CD8-positive, alpha-beta T cell (primary cell): ENCODE measurements at regions of chr12 and their contacts with region 1.

Region 1: DNA sequence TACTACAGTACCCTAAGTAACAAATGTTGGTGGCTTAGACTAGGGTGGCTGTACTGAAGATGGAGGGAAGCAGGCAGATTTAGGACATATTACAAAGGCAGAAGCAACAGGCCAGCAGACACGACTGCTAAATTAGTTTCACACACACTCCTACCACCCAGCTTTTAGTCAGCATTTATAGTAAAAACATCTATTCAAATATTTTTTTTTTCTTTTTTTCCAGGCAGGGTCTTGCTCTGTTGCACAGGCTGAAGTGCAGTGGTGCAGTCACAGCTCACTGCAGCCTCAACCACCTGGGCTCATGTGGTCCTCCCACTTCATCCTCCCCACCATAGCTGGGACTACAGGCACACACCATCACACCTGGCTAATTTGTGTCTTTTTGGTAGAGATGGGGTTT is 72.9 kb downstream of the CDK17 start:
- DNase-seq: no peak
- ATAC-seq: peak; percentile 24
- H3K4me3 ChIP-seq: no peak overlapping the region
- H3K4me3 Mint-ChIP-seq: no peak overlapping the region
- H3K27ac ChIP-seq: no peak overlapping the region
- H3K27ac Mint-ChIP-seq: peak overlapping the region; percentile 70
- H3K4me1 ChIP-seq: peaks cover 37% of the 10 kb centered on the region
- H3K4me1 Mint-ChIP-seq: peaks cover 65% of the 10 kb centered on the region
- H3K27me3 ChIP-seq: no peaks in the 10 kb centered on the region
- H3K27me3 Mint-ChIP-seq: no peaks in the 10 kb centered on the region
- CTCF ChIP-seq: no peak

Region 2: GRCh38 chr12:96314723-96315122 is 12.6 kb before region 1 on chr12:
- CTCF ChIA-PET with region 1: no interaction called
- POLR2A ChIA-PET with region 1: interaction called, 3 read pairs
- intact Hi-C with region 1: loop called in 1 of 2 experiments (anchors 2 kb)
- DNase-seq: no peak
- ATAC-seq: peak; percentile 17
- H3K4me3 ChIP-seq: no peak overlapping the region
- H3K4me3 Mint-ChIP-seq: no peak overlapping the region
- H3K27ac ChIP-seq: peak overlapping the region in 1 of 2 experiments; percentile 30
- H3K27ac Mint-ChIP-seq: peak overlapping the region; percentile 60
- H3K4me1 ChIP-seq: peaks cover 13% of the 10 kb centered on the region
- H3K4me1 Mint-ChIP-seq: peaks cover 24% of the 10 kb centered on the region
- H3K27me3 ChIP-seq: no peaks in the 10 kb centered on the region
- H3K27me3 Mint-ChIP-seq: no peaks in the 10 kb centered on the region
- CTCF ChIP-seq: no peak

Region 3: GRCh38 chr12:96751626-96752025 is 424.3 kb after region 1 on chr12:
- CTCF ChIA-PET with region 1: no interaction called
- POLR2A ChIA-PET with region 1: no interaction called
- intact Hi-C with region 1: no loop called
- DNase-seq: no peak
- ATAC-seq: no peak
- H3K4me3 ChIP-seq: no peak overlapping the region
- H3K4me3 Mint-ChIP-seq: no peak overlapping the region
- H3K27ac ChIP-seq: no peak overlapping the region
- H3K27ac Mint-ChIP-seq: no peak overlapping the region
- H3K4me1 ChIP-seq: no peaks in the 10 kb centered on the region
- H3K4me1 Mint-ChIP-seq: no peaks in the 10 kb centered on the region
- H3K27me3 ChIP-seq: peaks cover 0 to 4% of the 10 kb centered on the region in 2 experiments
- H3K27me3 Mint-ChIP-seq: peaks cover 6% of the 10 kb centered on the region
- CTCF ChIP-seq: no peak